ENCODE measurements at regions of chr3 and their contacts with region 1.

Region 1: DNA sequence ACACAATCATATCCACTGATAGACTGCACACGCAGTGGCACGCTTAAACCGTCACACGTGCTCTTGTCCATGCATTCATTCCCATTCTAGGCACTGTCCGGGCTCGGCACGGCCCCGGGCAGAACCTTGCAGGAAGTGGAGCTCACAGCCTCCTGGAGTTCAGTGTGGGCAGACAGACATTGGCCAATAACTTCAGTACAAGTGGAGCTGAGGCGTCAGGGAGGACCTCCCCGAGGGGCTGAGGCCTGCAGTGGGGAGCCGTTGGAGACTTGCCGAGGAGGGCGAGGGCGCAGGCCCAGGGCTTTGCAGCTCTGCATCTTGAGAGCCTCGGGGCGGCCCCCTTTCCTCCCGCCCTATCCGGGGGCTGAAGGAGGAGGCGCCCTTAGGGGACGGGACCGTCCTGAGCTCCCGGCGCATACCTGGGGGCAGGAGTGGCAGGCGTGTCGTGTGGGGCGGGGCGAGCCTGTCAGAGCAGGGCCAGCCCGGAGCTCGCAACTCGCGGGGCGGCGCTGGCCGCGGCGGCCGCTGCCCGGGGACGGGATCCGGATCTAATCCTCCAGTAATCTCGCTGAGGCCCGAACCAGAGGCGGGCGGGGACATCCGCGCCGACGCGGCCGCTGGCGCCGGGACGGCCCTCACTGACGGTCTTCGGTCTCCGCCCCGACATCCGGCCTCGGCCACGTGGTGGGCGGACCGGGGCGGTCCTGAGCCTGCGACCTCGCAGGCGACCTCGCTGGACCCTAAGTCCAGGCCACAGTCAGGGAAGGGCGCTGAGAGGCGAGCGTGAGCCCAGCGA is at the start of gene ACY1:
- DNase-seq: peak; percentile 74
- H3K4me3 Mint-ChIP-seq: peak within 1 kb of the TSS; percentile 91
- H3K27ac Mint-ChIP-seq: peak within 1 kb of the TSS; percentile 88
- H3K4me1 Mint-ChIP-seq: peaks cover 29% of the 10 kb centered on the region
- H3K27me3 Mint-ChIP-seq: no peaks in the 10 kb centered on the region
- total RNA-seq, gene ACY1: 16.5 to 19.4 TPM

Region 2: GRCh38 chr3:51953445-51953844 is 29.5 kb before region 1 on chr3:
- CTCF ChIA-PET with region 1: no interaction called
- POLR2A ChIA-PET with region 1: no interaction called
- DNase-seq: no peak
- H3K4me3 Mint-ChIP-seq: no peak overlapping the region
- H3K27ac Mint-ChIP-seq: no peak overlapping the region
- H3K4me1 Mint-ChIP-seq: peaks cover 11% of the 10 kb centered on the region
- H3K27me3 Mint-ChIP-seq: peaks cover 34% of the 10 kb centered on the region

Region 3: DNA sequence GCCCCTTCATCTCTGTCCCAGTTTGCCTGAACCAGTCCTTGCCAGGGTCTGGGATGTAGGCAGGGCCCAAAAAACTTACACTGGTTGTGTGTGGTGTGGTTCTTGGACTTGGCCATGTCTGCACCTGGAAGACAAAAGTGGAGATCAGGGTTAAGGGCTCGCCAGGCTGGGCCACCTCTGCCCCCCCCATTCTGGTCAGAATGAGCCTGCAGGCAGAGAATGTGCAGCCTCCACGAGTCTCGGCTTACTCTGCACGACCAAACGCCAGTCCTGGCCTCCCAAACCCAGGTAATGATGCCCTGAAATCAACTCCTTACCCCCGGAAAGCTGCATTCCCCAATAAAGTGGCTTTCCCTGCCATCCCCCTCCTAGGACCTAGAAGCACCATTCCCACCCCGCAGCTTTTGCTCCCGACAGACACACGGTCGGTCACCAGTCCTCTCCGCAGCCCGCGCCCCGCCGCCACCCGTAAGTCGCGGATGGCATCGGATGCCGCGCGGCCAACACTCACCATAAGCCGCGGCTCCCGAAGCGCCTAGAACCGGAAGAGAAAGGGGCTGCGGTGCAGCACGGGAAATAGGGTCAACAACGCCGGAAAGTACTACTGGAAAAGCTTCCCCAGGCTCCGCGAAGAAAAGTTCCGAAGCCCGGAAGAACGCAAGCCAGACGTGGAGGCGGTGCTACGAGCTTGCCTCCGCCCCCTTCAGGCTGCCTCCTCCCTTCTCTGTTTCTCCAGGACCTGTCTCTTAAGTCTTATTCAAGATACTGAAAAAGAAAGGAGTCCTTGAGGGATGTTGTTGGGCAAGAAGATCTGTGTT is 12.6 kb after region 1 on chr3 and contains the start of gene RPL29:
- CTCF ChIA-PET with region 1: interaction called, 10 read pairs
- POLR2A ChIA-PET with region 1: interaction called, 10 read pairs
- DNase-seq: peak; percentile 94
- H3K4me3 Mint-ChIP-seq: peak within 1 kb of the TSS; percentile 99
- H3K27ac Mint-ChIP-seq: peak within 1 kb of the TSS; percentile 100
- H3K4me1 Mint-ChIP-seq: peaks cover 45% of the 10 kb centered on the region
- H3K27me3 Mint-ChIP-seq: peaks cover 10% of the 10 kb centered on the region
- total RNA-seq, gene RPL29: 1,423 to 1,425 TPM

Region 4: GRCh38 chr3:52012699-52013098 is 29.7 kb after region 1 on chr3:
- CTCF ChIA-PET with region 1: no interaction called
- POLR2A ChIA-PET with region 1: no interaction called
- DNase-seq: no peak
- H3K4me3 Mint-ChIP-seq: no peak overlapping the region
- H3K27ac Mint-ChIP-seq: no peak overlapping the region
- H3K4me1 Mint-ChIP-seq: no peaks in the 10 kb centered on the region
- H3K27me3 Mint-ChIP-seq: peaks cover 3% of the 10 kb centered on the region

Measured in activated CD4-positive, alpha-beta T cell treated with anti-CD3 and anti-CD28 coated beads, Interleukin-2, amount 10 ng/mL, durations not matched to agents 7 days and 5 days (primary cell).